H1 (cell line): ENCODE measurements at regions of chr1 and their contacts with region 1.

Region 1: GRCh38 chr1:181166377-181167196 is 78.1 kb downstream of the IER5 start:
- DNase-seq: peak in 1 of 2 experiments; percentile 80
- H3K4me3 ChIP-seq: no peak overlapping the region
- H3K27ac ChIP-seq: no peak overlapping the region
- H3K4me1 ChIP-seq: no peaks in the 10 kb centered on the region
- H3K27me3 ChIP-seq: peaks cover 0 to 2% (median 0%) of the 10 kb centered on the region in 4 experiments; a peak in 1 of 7 replicates
- CTCF ChIP-seq: peak; percentile 32 to 88 (median 83)
- EP300 ChIP-seq: no peak
- POLR2A ChIP-seq: no peak
- RAD21 ChIP-seq: peak; percentile 96 to 97

Region 2: DNA sequence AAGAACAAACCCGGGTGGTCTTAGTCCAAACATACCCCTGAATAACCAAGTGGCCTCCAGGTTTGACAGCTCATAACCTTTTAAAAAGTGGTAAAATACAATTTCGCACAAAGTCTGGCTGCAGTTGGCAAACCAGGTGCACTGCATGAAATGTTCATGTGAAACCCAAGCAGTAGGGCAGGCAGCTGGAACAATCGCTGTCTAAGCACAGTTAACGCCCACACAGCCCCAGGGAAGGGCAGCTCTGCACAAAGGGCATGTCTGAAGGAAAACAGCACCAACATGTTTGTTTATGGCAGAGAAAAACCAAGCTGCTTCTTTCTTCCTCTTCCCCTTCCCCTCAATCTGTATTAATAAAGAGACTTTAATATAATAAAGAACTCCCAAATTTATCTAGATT is 204.4 kb before region 1 on chr1:
- CTCF ChIA-PET with region 1: no interaction called
- POLR2A ChIA-PET with region 1: no interaction called
- DNase-seq: no peak
- H3K4me3 ChIP-seq: no peak overlapping the region
- H3K27ac ChIP-seq: no peak overlapping the region
- H3K4me1 ChIP-seq: no peaks in the 10 kb centered on the region
- H3K27me3 ChIP-seq: no peaks in the 10 kb centered on the region
- CTCF ChIP-seq: no peak
- EP300 ChIP-seq: no peak
- POLR2A ChIP-seq: no peak
- RAD21 ChIP-seq: no peak

Region 3: DNA sequence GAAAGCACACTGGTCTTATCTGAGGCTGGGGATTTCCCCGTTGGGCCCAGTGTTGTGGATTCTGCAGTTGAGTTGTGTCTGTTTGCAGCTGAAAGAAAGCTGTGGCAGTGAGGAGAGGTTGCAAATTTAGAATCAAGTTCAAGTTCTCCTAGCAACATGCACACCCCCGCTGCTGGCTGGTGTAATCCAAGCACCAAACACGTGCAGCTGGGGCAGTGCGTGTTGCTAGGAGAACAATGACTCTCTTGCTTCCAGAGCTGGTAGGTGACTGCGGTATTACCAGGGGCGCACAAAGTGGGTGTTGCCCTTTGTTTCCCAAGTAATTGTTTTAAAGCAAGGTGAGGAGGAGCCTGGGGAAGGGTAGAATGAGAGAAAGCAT is 13.4 kb after region 1 on chr1:
- CTCF ChIA-PET with region 1: interaction called, 10 read pairs
- POLR2A ChIA-PET with region 1: no interaction called
- DNase-seq: peak in 1 of 2 experiments; percentile 60
- H3K4me3 ChIP-seq: peak overlapping the region in 2 of 4 experiments; percentile 7 to 27; a peak in 3 of 8 replicates
- H3K27ac ChIP-seq: no peak overlapping the region
- H3K4me1 ChIP-seq: peaks cover 15 to 27% (median 21%) of the 10 kb centered on the region in 4 experiments
- H3K27me3 ChIP-seq: no peaks in the 10 kb centered on the region
- CTCF ChIP-seq: no peak
- EP300 ChIP-seq: no peak
- POLR2A ChIP-seq: no peak
- RAD21 ChIP-seq: no peak